ENCODE measurements at regions of chr2 and their contacts with region 1.

Region 1: GRCh38 chr2:218394298-218395089 is 5.2 kb upstream of the CTDSP1 start:
- DNase-seq: no peak
- H3K4me3 ChIP-seq: no peak overlapping the region
- H3K27ac ChIP-seq: peak overlapping the region in 1 of 3 donors; percentile 99
- H3K4me1 ChIP-seq: peaks cover 22 to 23% of the 10 kb centered on the region in 2 donors
- H3K27me3 ChIP-seq: no peaks in the 10 kb centered on the region
- CTCF ChIP-seq: no peak
- POLR2A ChIP-seq: no peak

Region 2: DNA sequence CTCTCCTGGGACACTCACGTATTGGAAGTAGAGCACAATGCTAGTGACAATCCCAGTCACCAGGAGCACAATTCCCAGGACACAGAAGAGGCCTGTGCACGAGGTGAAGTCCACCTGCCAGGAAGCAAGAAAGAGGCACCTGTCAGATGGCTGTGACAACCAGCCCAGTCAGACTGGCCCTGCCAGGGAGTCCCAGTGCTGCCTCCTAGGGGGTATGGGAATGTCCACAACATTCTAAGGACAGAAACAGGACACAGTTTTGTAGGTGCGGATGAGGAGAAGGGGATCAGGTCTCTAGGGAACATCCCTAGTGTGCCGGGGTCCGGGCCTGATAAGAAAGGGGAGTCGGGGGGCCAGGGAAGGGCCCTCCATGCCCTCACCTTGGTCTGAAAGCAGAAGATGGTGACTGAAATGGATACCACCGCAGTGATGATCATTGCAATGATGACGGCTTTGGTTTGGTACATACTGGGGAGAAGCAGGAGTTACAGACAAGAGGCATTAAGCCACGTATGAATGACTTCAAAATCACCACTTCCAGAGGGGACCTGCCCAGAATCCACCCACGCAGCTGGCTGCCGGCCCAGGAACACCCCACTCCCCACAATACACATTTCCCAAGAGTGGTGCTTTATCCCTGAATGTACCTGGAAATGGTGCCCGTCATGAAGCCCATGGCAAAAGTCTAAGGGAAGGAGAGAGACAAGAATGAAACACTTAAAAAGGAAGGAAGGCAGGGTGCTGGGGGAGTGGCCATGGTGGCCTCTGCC is 117.3 kb before region 1 on chr2:
- intact Hi-C with region 1: loop called (anchors 5 kb)
- DNase-seq: peak; percentile 51 to 72
- H3K4me3 ChIP-seq: no peak overlapping the region
- H3K27ac ChIP-seq: peak overlapping the region; percentile 3 to 94 (median 79)
- H3K4me1 ChIP-seq: peaks cover 50 to 61% of the 10 kb centered on the region in 2 donors
- H3K27me3 ChIP-seq: no peaks in the 10 kb centered on the region
- CTCF ChIP-seq: peak in 1 of 6 experiments; percentile 14
- POLR2A ChIP-seq: no peak

Region 3: DNA sequence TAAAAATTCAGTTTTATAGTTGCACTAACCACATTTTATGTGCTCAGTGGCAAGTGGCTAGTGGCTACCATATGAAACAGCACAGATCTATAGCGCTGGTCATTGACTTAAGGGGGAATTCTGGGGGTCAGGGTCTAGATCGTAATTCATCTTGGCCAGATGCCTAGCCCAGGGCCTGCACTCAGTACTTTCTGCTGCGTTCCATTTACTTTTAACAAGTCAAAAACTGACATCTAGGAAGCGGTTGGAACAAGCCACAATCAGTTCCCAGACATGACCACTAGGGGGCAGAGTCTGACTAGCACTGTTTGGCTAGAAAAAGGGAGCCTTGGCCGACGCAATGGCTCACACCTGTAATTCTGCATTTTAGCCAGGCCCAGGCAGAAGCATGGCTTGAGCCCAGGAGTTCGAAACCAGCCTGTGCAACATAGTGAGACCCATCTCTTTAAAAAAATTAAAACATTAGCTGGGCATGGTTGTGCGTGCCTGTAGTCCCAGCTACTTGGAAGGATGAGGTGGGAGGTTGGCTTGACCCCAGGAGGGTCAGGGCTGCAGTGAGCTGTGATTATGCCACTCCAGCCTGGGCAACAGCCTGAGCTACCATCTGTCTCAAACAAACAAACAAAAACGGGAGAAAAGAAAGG is 93.2 kb before region 1 on chr2:
- intact Hi-C with region 1: loop called (anchors 5 kb)
- DNase-seq: peak; percentile 90 to 93
- H3K4me3 ChIP-seq: no peak overlapping the region
- H3K27ac ChIP-seq: peak overlapping the region; percentile 39 to 59 (median 47)
- H3K4me1 ChIP-seq: peaks cover 24 to 33% of the 10 kb centered on the region in 2 donors
- H3K27me3 ChIP-seq: no peaks in the 10 kb centered on the region
- CTCF ChIP-seq: peak; percentile 92 to 99 (median 96)
- POLR2A ChIP-seq: no peak